Ovary (tissue), 10 donors: ENCODE measurements at regions of chr22 and their contacts with region 1.

Region 1: DNA sequence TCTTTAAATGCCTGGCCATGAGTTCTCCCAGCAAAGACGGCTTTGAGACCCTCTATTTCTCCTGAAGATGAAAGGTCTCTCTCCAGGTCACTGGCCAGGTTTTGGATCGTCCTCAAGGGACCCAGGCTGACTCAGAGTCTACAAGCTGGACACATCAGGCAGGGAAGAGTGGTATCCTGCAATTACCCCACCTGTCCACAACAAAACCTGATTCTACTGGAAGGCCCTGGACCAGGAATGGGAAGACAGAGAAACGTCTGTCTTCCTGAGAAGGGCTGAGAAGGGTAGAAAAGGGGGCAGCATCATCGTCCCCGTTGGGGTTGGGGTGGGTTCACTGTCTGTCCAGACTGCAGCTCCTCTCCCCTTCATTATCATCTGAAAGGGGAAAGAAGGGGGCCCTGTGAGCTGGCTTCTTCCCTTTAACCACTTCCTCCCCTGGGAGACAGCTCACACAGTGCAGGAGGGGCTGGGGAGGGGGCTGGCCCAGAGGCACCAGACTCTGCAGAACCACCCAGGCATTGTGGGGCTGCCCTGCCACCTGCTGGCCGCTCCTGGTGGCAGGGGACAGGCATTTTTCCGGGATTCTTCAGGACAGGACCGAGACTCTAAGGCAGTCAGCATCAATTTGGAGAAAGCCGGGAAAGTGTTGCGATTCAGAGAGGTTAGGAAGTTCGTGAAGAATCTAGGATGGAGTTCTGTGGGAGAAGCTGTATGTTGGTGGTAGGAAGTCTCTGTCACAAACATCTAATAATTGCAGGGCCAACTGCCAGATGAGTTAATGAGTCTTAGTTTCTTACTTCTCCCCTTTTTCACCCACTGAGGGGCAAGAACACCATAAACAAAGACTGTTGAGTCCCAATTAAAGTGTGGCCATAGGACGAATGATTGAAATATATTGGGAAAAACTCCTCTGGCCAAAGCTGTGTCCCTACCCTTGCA is 57.6 kb downstream of the SYN3 start:
- DNase-seq: peak; percentile 22 to 74 (median 64)
- H3K4me3 ChIP-seq: no peak overlapping the region
- H3K27ac ChIP-seq: no peak overlapping the region
- H3K4me1 ChIP-seq: no peaks in the 10 kb centered on the region
- H3K27me3 ChIP-seq: no peaks in the 10 kb centered on the region
- CTCF ChIP-seq: peak; percentile 78 to 84 (median 80)
- EP300 ChIP-seq: no peak
- POLR2A ChIP-seq: no peak

Region 2: GRCh38 chr22:32660292-32660691 is 340.3 kb before region 1 on chr22:
- intact Hi-C with region 1: loop called in 2 of 4 experiments (anchors 5 to 10 kb)
- DNase-seq: peak; percentile 33 to 69 (median 57)
- H3K4me3 ChIP-seq: no peak overlapping the region
- H3K27ac ChIP-seq: no peak overlapping the region
- H3K4me1 ChIP-seq: no peaks in the 10 kb centered on the region
- H3K27me3 ChIP-seq: no peaks in the 10 kb centered on the region
- CTCF ChIP-seq: peak; percentile 19 to 52 (median 36)
- EP300 ChIP-seq: no peak
- POLR2A ChIP-seq: no peak

Region 3: GRCh38 chr22:33018232-33018864 is 17.7 kb after region 1 on chr22:
- intact Hi-C with region 1: no loop called
- DNase-seq: peak in 2 of 5 donors; percentile 24 to 40
- H3K4me3 ChIP-seq: no peak overlapping the region
- H3K27ac ChIP-seq: no peak overlapping the region
- H3K4me1 ChIP-seq: no peaks in the 10 kb centered on the region
- H3K27me3 ChIP-seq: no peaks in the 10 kb centered on the region
- CTCF ChIP-seq: peak in 1 of 3 donors; percentile 9
- EP300 ChIP-seq: no peak
- POLR2A ChIP-seq: no peak